B cell (primary cell): ENCODE measurements at regions of chr9 and their contacts with region 1.

Region 1: DNA sequence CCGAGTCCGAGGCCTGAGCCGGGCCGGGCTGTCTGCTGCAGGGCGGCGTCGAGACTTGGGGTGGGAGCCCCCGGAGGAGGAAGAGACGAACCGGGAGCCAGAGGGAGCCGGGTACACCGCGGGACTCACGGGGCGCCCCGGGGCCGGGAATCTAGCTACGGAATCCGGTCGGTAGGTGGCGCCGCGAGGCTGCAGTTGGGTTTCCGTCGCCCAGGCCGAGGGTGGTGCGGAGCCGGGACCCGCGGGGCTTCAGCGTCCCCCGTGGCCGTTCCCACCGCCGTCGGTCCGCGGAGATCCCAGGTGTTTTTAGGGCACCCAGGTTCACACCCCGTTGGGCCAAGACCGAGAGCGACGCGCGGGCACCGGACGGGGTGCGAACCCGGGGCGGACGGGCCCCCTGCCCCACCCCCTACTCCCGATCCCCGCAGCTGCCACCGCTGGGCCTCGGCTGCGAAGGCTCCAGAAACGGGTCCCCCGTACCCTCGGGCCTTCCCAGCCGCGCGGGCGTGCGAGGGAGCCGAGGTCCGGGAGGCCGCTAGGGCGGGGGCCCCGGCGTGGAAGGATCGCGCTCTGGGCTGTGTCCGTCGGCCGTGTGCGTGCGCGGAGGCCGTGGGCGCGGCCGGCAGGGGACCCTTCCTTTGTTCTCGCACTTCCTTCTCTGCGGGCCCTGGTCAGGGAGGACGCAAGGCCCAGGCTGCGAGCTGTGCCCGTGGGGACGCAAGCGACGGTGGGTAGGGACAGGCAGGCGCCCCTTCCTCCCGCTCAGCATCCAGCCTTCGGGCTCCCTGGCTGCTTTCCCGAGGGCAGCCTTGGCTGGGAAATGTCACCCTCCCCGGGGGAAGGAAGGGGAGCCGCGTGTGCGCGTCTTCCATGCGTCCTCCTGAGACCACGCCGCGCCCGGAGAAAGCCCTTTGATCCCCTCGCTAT is 146.6 kb downstream of the GAPVD1 start:
- DNase-seq: peak; percentile 87
- ATAC-seq: peak; percentile 81
- H3K4me3 ChIP-seq: peak overlapping the region; percentile 5 to 68 (median 51)
- H3K4me3 Mint-ChIP-seq: peak overlapping the region; percentile 80
- H3K27ac ChIP-seq: peak overlapping the region in 1 of 2 donors; percentile 15
- H3K27ac Mint-ChIP-seq: no peak overlapping the region
- H3K4me1 ChIP-seq: peaks cover 10 to 19% of the 10 kb centered on the region in 2 donors
- H3K4me1 Mint-ChIP-seq: peaks cover 16% of the 10 kb centered on the region
- H3K27me3 ChIP-seq: peaks cover 0 to 33% (median 9%) of the 10 kb centered on the region in 4 experiments
- H3K27me3 Mint-ChIP-seq: peaks cover 23% of the 10 kb centered on the region
- CTCF ChIP-seq: peak; percentile 93

Region 2: DNA sequence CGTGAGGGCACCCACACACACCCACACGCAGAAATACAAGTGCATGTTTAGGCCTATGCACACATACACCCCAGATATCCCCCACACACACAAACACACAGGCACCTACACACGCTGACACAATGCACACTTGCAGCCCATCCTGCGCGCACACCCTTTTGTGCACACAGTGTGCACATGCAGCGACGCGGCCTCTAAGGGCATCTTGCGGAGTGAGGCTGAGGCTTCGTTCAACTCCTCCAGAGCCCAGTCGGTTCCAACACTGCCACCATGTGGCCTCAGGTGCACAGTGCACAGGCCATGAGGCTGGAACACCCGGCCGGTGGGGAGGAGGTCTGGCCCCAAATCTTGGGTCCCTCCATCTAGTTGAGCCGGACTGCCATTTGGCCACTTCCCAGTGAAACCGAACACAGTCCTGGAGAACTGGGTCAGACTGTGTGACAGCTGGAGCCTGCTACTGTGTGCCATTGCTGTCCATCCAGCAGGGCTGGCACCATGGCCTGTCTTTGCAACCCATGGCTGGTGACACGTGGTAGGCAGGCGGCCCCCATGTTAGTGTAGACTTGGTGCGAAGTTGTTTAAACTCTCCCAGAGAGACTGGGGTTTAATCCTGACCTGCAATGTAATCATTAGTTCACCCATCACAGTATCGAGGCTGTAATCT is 820.7 kb after region 1 on chr9:
- CTCF ChIA-PET with region 1: interaction called, 40 read pairs
- POLR2A ChIA-PET with region 1: no interaction called
- intact Hi-C with region 1: loop called (anchors 1 kb)
- DNase-seq: peak; percentile 79
- ATAC-seq: peak; percentile 98
- H3K4me3 ChIP-seq: no peak overlapping the region
- H3K4me3 Mint-ChIP-seq: no peak overlapping the region
- H3K27ac ChIP-seq: no peak overlapping the region
- H3K27ac Mint-ChIP-seq: no peak overlapping the region
- H3K4me1 ChIP-seq: peaks cover 0 to 3% of the 10 kb centered on the region in 2 donors
- H3K4me1 Mint-ChIP-seq: peaks cover 6% of the 10 kb centered on the region
- H3K27me3 ChIP-seq: peaks cover 0 to 25% (median 0%) of the 10 kb centered on the region in 4 experiments
- H3K27me3 Mint-ChIP-seq: peaks cover 40% of the 10 kb centered on the region
- CTCF ChIP-seq: peak; percentile 89

Region 3: GRCh38 chr9:126301985-126302603 is 893.9 kb after region 1 on chr9:
- CTCF ChIA-PET with region 1: interaction called, 10 read pairs
- POLR2A ChIA-PET with region 1: no interaction called
- intact Hi-C with region 1: no loop called
- DNase-seq: peak; percentile 66
- ATAC-seq: peak; percentile 69
- H3K4me3 ChIP-seq: no peak overlapping the region
- H3K4me3 Mint-ChIP-seq: no peak overlapping the region
- H3K27ac ChIP-seq: no peak overlapping the region
- H3K27ac Mint-ChIP-seq: no peak overlapping the region
- H3K4me1 ChIP-seq: no peaks in the 10 kb centered on the region
- H3K4me1 Mint-ChIP-seq: no peaks in the 10 kb centered on the region
- H3K27me3 ChIP-seq: peaks cover 0 to 5% (median 0%) of the 10 kb centered on the region in 4 experiments
- H3K27me3 Mint-ChIP-seq: peaks cover 11% of the 10 kb centered on the region
- CTCF ChIP-seq: peak; percentile 62